ENCODE measurements at regions of chr4 and their contacts with region 1.

Region 1: DNA sequence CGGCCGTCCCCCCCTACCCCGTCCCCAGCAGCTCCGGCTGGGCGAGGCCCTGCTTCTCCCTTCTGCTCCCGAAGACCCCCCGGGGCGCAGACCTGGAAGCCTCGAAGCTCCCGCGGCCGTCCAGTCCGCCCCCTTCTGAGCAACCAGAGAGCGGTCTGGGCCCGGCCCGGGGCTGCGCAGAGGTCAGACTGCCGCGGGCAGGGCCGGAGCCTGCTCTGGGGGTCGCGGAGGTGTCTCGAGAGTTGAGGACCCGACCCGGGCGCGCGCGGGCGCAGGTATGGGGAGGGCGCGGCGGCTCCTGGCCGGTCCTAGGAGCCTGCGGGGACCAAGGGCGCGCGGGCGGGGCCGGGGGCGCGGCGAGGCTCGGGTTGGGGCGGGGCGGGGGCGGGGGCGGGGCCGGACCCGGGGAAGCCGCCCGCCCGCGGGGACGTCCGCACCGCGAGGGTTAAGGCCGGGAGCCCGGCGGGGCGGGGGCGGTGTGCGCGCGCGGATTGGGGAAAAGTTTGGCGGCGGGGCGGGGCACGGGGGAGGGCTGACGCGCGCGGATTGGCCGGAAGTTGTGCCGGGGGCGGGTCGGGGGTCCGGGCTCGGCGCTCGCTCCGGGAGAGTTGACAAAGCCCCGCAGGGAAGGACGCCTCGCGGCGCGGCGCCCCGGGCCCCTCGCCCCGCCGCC is at the start of gene FGFRL1:
- DNase-seq: peak; percentile 89
- H3K4me3 Mint-ChIP-seq: peak within 1 kb of the TSS; percentile 86
- H3K27ac Mint-ChIP-seq: peak within 1 kb of the TSS; percentile 89
- H3K4me1 Mint-ChIP-seq: peaks cover 15% of the 10 kb centered on the region
- H3K27me3 Mint-ChIP-seq: peaks cover 28% of the 10 kb centered on the region
- total RNA-seq, gene FGFRL1: 15.5 TPM in 2 replicates

Region 2: DNA sequence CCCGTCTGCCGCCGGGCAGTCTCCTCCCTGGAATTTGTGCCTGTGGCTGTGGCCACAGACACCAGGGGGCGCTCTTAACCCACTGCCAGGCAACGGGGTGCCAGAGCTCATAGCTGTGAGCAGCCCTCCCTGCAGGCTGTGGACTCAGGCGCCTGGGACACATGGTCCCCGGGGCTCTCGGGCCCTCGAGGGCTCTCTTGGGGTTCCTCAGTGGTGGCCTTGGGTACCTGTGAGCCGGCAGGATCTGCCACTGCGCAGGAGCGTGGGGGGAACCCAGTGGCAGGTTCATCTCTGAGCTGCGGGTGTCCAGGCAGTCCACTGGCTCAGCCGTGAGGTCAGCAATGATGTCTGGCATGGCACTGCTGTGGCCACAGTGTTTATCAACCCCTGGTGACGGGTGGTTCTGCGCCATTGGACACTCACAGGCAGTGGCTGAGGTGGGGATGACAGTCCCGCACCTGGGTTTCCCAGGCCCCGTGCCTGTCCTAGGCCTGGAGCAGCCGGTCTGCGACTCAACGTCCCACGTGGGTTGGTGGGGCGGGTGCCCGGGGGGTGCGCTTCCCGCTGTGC is 268.3 kb before region 1 on chr4:
- intact Hi-C with region 1: loop called (anchors 2 kb)
- DNase-seq: peak; percentile 63
- H3K4me3 Mint-ChIP-seq: no peak overlapping the region
- H3K27ac Mint-ChIP-seq: no peak overlapping the region
- H3K4me1 Mint-ChIP-seq: no peaks in the 10 kb centered on the region
- H3K27me3 Mint-ChIP-seq: no peaks in the 10 kb centered on the region

Region 3: DNA sequence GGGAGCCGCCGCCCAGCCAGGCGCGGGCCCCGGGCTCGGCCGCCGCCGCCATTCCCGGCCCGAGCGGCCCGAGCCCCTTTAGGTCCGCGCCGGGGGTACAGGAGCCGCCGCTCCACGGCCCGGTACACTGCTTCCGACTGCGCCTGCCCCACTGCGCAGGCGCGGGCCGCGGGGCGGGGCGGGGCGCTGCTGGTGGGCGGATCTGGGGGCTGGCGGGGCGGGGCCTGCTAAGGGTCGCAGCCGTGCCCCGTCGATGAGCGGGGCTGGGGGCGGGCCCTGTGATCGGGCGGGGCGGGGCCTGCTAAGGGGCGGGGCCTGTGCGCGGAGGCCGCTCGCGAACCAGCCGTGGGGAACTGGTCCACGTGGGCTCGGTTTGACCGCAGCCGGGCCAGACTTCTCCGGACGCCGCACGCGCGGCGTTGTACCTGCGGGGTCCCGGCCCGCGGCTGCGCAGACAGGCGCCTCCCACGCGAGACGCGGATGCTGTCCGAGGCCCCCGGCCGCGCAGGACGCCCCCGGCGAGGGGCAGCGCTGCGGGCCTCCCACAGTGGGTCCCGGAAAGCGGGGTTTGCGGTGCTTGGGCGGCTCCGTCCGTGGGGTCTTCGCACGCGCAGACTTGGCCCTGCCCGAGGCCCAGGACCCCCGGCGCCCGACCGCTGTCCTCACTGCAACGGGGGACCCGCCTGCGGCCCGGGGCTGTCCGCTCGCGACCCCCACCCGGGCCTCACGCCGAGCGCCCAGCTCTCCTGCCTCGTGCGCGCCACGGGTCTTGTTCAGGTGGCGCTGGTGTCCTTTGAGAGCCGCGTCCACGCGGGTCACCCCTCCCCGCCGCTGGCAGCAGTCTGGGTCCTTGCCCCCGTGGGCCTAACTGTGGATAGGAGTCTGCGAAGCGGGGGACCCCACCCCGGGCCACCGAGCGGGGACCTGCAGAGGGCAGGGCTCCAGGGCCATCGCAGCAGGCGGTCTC is 37.4 kb before region 1 on chr4 and contains the start of gene DGKQ:
- intact Hi-C with region 1: loop called (anchors 1 kb)
- DNase-seq: peak; percentile 80
- H3K4me3 Mint-ChIP-seq: peak within 1 kb of the TSS; percentile 51
- H3K27ac Mint-ChIP-seq: no peak within 1 kb of the TSS
- H3K4me1 Mint-ChIP-seq: no peaks in the 10 kb centered on the region
- H3K27me3 Mint-ChIP-seq: no peaks in the 10 kb centered on the region
- total RNA-seq, gene DGKQ: 17.8 and 18.0 TPM in 2 replicates

Region 4: GRCh38 chr4:986879-987623 is 24.1 kb before region 1 on chr4 and contains the start of gene IDUA:
- intact Hi-C with region 1: loop called (anchors 1 kb)
- DNase-seq: peak; percentile 84
- H3K4me3 Mint-ChIP-seq: peak within 1 kb of the TSS; percentile 88
- H3K27ac Mint-ChIP-seq: peak within 1 kb of the TSS; percentile 81
- H3K4me1 Mint-ChIP-seq: peaks cover 17% of the 10 kb centered on the region
- H3K27me3 Mint-ChIP-seq: no peaks in the 10 kb centered on the region
- total RNA-seq, gene IDUA: 33.8 and 34.3 TPM in 2 replicates

Region 5: GRCh38 chr4:1055721-1056590 is 44.8 kb after region 1 on chr4:
- intact Hi-C with region 1: loop called (anchors 5 kb)
- DNase-seq: peak; percentile 73
- H3K4me3 Mint-ChIP-seq: peak overlapping the region; percentile 61
- H3K27ac Mint-ChIP-seq: peak overlapping the region; percentile 52
- H3K4me1 Mint-ChIP-seq: peaks cover 9% of the 10 kb centered on the region
- H3K27me3 Mint-ChIP-seq: peaks cover 14% of the 10 kb centered on the region

Region 6: GRCh38 chr4:1249148-1249730 is 238.1 kb after region 1 on chr4:
- intact Hi-C with region 1: loop called (anchors 2 kb)
- DNase-seq: peak; percentile 83
- H3K4me3 Mint-ChIP-seq: peak overlapping the region; percentile 89
- H3K27ac Mint-ChIP-seq: peak overlapping the region; percentile 96
- H3K4me1 Mint-ChIP-seq: peaks cover 57% of the 10 kb centered on the region
- H3K27me3 Mint-ChIP-seq: no peaks in the 10 kb centered on the region

Region 7: GRCh38 chr4:1712216-1713002 is 701.3 kb after region 1 on chr4 and contains the start of gene SLBP:
- intact Hi-C with region 1: loop called (anchors 2 kb)
- DNase-seq: peak; percentile 99
- H3K4me3 Mint-ChIP-seq: peak within 1 kb of the TSS; percentile 99
- H3K27ac Mint-ChIP-seq: peak within 1 kb of the TSS; percentile 89
- H3K4me1 Mint-ChIP-seq: peaks cover 59% of the 10 kb centered on the region
- H3K27me3 Mint-ChIP-seq: no peaks in the 10 kb centered on the region
- total RNA-seq, gene SLBP: 136 and 140 TPM in 2 replicates